ENCODE measurements at regions of chr1 and their contacts with region 1.

Region 1: DNA sequence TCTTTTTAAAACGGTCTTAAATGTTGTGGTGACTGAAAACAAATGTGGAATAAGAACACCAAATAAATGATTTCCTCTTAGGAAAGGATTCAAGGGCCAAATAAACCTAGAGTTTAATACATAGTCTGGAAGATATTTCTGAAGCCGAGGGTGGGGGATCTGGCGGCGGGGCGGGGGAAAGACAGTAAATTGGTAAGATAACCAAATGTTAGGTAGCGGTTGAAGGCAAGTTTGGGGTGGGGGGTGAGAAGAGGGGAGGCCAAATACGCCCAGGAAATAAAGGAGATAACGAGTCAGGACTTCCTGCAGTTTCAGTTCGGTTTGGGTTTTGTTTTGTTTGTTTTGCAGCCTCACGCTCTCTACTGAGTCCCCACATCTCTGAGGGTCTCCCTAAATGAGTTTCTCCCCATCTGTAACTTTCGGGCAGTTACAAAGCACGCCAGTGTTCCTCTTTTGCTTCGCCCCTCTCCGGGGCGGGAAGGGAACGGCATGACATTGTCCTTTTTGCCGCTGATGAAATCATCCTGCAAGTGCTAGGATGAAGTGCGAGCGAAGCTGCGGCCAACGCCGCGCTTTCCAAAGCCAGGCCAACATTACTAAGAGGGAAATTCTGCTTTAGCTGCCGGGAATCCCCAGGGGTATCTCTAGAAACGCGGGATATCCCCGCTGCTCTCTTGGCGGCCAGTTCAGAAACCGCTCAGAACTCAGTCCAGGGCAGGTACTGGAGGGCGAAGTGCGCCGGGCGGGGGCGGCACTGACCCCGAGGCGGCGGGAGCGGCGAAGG is 844 bp downstream of the NIBAN1 start:
- DNase-seq: peak; percentile 50 to 81 (median 78)
- ATAC-seq: peak; percentile 58 to 66
- H3K4me3 ChIP-seq: peak overlapping the region; percentile 83
- H3K27ac ChIP-seq: peak overlapping the region; percentile 83
- H3K4me1 ChIP-seq: no peaks in the 10 kb centered on the region
- H3K27me3 ChIP-seq: no peaks in the 10 kb centered on the region

Region 2: GRCh38 chr1:184881941-184882913 is 91.2 kb before region 1 on chr1:
- intact Hi-C with region 1: loop called in 2 of 4 experiments (anchors 10 kb)
- DNase-seq: peak; percentile 57 to 76 (median 60)
- ATAC-seq: peak; percentile 78 to 85
- H3K4me3 ChIP-seq: no peak overlapping the region
- H3K27ac ChIP-seq: peak overlapping the region; percentile 94
- H3K4me1 ChIP-seq: peaks cover 5% of the 10 kb centered on the region
- H3K27me3 ChIP-seq: no peaks in the 10 kb centered on the region

Measured in right cardiac atrium (tissue), 5 donors.